RWPE1 (cell line): ENCODE measurements at regions of chr3 and their contacts with region 1.

Region 1: GRCh38 chr3:192444096-192444790 is 283.1 kb downstream of the FGF12 start:
- DNase-seq: peak; percentile 54
- H3K27ac ChIP-seq: no peak overlapping the region
- CTCF ChIP-seq: peak; percentile 97

Region 2: GRCh38 chr3:192423003-192423349 is 21.3 kb before region 1 on chr3:
- CTCF ChIA-PET with region 1: interaction called, 15 read pairs
- POLR2A ChIA-PET with region 1: no interaction called
- DNase-seq: no peak
- H3K27ac ChIP-seq: no peak overlapping the region
- CTCF ChIP-seq: peak; percentile 33